ENCODE measurements at regions of chr15 and their contacts with region 1.

Region 1: DNA sequence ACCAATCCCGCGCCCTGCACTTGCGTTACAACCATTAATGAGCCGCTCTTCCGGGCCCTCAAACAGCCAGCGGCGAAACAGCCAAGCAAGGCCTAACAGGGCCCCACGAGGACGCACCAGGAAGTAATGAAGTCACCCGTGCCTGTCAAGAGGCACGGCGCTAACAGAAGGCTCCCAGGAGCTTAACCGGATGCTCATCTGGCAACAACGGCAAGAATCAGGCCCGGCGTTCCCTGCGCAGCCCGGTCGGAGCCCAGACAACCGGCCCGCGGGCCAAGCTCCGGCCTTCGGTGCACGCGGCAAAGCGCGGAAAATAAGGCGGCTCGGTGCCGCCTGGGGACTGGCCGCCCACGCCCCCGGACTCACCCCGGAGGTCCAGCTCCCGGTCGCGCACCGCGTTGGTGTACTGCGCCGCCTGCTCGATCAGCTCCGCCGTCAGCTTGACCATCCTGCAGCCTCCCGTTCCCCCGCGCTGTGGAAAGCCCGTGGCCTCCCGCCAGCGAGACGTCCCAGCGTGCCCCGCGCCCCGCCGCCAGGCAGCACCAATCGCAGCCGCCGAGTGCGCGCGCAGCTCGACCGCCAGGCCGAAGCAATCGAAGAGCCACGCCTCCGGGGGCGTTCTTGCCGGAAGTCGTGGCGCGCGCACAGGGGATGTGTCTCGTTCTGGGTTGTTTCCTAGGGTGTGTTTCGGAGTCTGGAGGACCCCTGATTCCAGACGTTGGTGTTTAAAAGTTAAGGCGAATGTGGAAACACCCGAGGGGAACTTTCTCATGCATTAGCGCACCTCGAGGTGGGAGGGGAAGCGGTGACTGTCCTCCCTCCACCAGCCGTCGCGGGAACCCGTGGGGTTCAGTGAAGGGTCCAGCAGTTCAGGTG is at the start of gene SNRPA1:
- DNase-seq: peak; percentile 99
- ATAC-seq: peak; percentile 96
- total RNA-seq, gene SNRPA1: 43.8 TPM

Region 2: DNA sequence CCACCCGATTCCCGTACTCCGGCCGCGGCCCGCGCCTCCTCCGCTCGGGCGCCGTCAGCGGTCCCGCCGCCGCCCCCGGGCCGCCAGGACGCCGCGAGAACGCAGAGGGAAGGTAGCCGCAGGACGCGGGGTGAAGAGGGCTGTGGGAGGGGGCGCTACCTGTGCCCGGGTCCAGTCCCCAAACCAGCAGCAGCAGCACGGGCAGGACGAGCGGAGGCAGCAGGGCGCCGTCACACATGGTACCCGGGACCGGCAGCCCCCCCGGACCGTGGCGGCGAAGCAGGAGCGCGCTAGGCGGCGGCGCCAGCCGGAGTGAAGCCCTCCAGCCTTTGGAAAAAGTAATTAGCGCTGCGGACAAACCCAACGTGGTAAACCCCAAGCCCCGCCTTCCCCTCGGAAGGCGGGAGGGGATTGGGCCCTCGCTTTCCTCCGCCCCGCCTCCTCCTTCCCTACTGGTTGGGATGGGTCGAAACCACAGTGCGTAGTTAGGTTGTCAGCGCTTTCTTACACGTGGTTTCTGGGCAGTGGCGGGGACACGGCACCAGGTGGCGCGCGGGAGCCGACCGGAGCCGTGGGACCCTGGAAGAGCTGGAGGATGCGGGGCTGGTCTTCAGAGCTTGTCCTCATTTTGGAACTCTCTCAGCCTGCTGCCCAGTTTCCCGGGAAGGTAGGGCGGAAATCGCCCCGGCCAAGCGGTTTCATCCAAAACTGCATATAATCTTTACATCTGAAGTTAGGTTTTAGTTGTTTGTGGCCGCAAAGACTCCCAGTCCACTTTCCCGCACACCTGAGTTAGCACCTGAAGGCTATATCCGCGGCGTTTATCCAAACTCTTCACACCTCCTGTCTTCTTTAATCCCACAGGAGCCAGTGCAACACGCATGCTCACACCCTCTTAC is 953.1 kb before region 1 on chr15 and contains the start of gene ADAMTS17:
- intact Hi-C with region 1: loop called (anchors 5 kb)
- DNase-seq: peak; percentile 97
- ATAC-seq: peak; percentile 99
- total RNA-seq, gene ADAMTS17: 2.3 TPM

Region 3: GRCh38 chr15:101641166-101641764 is 346.3 kb after region 1 on chr15:
- intact Hi-C with region 1: loop called (anchors 5 kb)
- DNase-seq: peak; percentile 87
- ATAC-seq: peak; percentile 72